Calu3 (cell line): ENCODE measurements at regions of chr13 and their contacts with region 1.

Region 1: DNA sequence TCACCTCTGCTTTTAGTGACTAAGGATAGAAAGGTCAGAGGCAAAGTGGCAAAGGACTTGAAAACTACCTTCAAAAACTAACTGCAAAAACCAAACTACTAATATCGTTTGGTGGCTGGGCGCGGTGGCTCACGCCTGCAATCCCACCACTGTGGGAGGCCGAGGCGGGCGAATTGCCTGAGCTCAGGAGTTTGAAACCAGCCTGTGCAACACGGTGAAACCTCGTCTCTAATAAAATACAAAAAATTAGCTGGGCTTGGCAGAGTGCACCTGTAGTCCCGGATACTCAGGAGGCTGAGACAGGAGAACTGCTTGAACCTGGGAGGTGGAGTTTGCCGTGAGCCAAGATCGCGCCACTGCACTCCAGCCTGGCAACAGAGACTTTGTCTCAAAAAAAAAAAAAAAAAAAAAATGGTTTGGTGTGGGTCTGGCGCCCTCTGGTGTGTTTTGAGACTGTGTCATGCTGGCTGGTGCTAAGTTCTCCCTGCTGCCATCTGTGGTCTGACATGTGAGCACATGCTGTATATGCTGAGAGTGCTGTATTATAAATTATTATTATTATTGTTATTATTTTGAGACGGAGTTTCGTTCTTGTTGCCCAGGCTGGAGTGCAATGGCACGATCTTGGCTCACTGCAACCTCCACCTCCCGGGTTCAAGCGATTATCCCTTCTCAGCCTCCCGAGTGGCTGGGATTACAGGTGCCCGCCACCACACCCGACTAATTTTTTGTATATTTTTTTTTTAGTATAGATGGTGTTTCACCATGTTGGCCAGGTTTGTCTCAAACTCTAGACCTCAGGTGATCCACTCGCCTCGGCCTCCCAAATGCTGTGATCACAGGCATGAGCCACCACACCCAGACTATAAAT is 36.0 kb upstream of the RNF17 start:
- DNase-seq: peak; percentile 66
- H3K4me3 Mint-ChIP-seq: no peak overlapping the region
- H3K27ac Mint-ChIP-seq: no peak overlapping the region
- H3K4me1 Mint-ChIP-seq: no peaks in the 10 kb centered on the region
- H3K27me3 Mint-ChIP-seq: peaks cover 43% of the 10 kb centered on the region
- CTCF ChIP-seq: no peak

Region 2: GRCh38 chr13:24313439-24313838 is 414.5 kb before region 1 on chr13:
- CTCF ChIA-PET with region 1: no interaction called
- intact Hi-C with region 1: loop called (anchors 5 kb)
- DNase-seq: no peak
- H3K4me3 Mint-ChIP-seq: no peak overlapping the region
- H3K27ac Mint-ChIP-seq: no peak overlapping the region
- H3K4me1 Mint-ChIP-seq: no peaks in the 10 kb centered on the region
- H3K27me3 Mint-ChIP-seq: peaks cover 23% of the 10 kb centered on the region
- CTCF ChIP-seq: no peak

Region 3: GRCh38 chr13:24605923-24606372 is 122.0 kb before region 1 on chr13:
- CTCF ChIA-PET with region 1: interaction called, 10 read pairs
- intact Hi-C with region 1: loop called (anchors 2 kb)
- DNase-seq: peak; percentile 48
- H3K4me3 Mint-ChIP-seq: no peak overlapping the region
- H3K27ac Mint-ChIP-seq: no peak overlapping the region
- H3K4me1 Mint-ChIP-seq: no peaks in the 10 kb centered on the region
- H3K27me3 Mint-ChIP-seq: peaks cover 23% of the 10 kb centered on the region
- CTCF ChIP-seq: peak; percentile 15

Region 4: DNA sequence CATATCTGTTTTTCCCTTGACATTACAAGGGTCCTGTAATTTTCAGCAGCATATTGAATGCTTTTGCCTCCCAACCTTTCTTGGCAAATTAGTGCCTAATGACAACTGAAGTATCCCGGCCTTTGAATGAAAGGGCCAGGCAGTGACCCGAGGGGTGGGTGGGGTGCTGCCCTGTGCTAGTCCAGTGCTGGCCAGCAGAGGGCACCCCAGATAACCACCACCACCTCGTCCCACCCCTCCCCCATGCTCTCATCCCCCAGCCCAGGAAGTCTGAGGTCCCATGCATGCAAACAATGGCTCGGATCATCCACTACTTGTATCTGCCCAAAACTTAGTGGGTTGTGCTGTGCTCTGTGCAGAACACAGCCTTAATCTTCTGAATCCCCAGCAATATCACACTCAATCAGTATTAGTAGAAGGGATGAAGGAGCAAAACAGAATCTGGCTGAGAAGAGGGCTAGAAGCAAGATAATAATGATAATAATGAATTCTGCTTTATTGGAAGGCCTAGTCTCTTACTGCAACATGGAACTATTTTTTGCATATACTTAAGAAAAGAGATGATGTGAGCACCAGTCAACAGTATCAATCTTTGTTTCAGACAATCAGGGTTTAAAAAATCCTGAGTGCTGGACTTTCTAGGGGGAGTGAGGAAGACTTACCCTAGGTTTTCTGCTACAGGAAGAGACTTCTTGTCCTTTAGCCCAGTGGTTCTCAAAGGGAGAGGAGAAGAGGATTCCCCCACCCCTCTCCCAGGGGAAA is 43.9 kb before region 1 on chr13:
- CTCF ChIA-PET with region 1: interaction called, 3 read pairs
- intact Hi-C with region 1: loop called (anchors 1 kb)
- DNase-seq: peak; percentile 82
- H3K4me3 Mint-ChIP-seq: peak overlapping the region; percentile 39
- H3K27ac Mint-ChIP-seq: no peak overlapping the region
- H3K4me1 Mint-ChIP-seq: peaks cover 40% of the 10 kb centered on the region
- H3K27me3 Mint-ChIP-seq: peaks cover 27% of the 10 kb centered on the region
- CTCF ChIP-seq: peak; percentile 61

Region 5: GRCh38 chr13:24693862-24694471 is 34.0 kb before region 1 on chr13:
- CTCF ChIA-PET with region 1: interaction called, 10 read pairs
- intact Hi-C with region 1: no loop called
- DNase-seq: peak; percentile 66
- H3K4me3 Mint-ChIP-seq: peak overlapping the region; percentile 9
- H3K27ac Mint-ChIP-seq: peak overlapping the region; percentile 3
- H3K4me1 Mint-ChIP-seq: peaks cover 13% of the 10 kb centered on the region
- H3K27me3 Mint-ChIP-seq: peaks cover 14% of the 10 kb centered on the region
- CTCF ChIP-seq: peak; percentile 40

Region 6: DNA sequence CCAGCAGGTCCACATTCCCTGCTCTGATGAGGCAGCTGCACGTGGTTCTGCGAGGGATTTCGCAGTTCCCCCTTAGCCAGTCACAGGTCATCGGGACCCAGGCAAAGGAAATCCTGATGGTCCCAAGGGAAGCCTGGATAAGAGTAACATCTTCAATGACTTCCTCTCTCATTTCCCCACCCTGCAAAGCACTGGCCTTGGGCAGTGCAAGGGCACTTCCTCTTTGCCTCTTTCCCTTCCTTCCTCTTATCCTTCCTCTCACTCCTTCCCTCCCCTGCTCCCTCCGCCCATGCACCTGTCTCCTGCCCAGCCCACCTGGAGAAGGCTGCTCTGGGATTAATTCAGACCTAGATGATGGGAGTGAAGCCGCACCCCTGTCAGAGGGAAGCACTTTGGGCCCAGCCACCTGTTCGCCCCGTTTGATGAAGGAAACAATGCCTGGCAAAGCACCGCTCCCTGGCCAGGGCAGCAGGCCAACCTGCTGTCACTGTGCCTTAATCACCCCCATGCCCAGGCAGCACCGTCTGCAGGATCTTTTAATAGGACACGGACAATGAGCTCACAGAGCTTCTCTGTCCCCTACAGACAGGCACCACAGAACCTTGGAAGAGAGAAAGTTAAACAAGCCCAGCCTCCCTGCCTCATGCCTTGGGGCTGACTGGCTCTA is 254.5 kb after region 1 on chr13:
- CTCF ChIA-PET with region 1: no interaction called
- intact Hi-C with region 1: no loop called
- DNase-seq: no peak
- H3K4me3 Mint-ChIP-seq: no peak overlapping the region
- H3K27ac Mint-ChIP-seq: no peak overlapping the region
- H3K4me1 Mint-ChIP-seq: no peaks in the 10 kb centered on the region
- H3K27me3 Mint-ChIP-seq: peaks cover 2% of the 10 kb centered on the region
- CTCF ChIP-seq: no peak